Dorsolateral prefrontal cortex (tissue), 120 donors: ENCODE measurements at regions of chr16 and their contacts with region 1.

Region 1: DNA sequence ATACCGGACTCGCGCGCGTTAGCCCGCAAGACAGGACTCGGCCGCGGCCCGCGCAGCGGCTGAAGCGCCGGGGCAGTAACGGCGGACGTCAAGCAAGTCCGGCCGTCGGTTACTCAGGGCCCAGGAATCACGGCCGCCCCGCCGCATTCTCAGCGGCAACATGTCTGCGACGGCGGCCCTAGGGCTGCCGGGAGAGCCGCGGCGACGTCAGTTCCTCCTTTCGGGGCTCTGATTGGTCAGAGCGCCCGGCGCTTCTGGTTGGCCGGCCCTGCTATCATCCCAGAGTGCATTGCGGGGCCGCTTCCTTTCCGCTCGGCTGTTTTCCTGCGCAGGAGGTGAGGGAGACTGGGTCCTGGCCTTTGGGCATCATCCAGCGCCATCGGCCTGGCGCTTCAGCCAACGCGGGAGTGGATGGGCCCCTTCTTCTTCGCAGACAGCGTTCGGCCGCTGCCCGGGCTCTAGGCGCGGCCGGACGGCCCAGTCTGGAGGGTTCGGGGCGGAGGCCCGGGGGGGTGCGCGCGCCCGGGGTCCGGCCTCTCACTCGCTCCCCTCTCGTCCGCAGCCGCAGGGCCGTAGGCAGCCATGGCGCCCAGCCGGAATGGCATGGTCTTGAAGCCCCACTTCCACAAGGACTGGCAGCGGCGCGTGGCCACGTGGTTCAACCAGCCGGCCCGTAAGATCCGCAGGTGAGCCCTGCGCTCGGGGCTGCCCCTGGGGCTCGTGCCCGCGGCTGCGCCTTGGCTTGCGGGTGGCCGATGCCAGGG is at the start of gene RPL13:
- DNase-seq: peak; percentile 93 to 96 (median 95)
- H3K4me3 ChIP-seq: peak within 1 kb of the TSS; percentile 55 to 99 (median 89)
- H3K27ac ChIP-seq: peak within 1 kb of the TSS; percentile 80 to 99 (median 96)
- H3K27me3 ChIP-seq: no peaks in the 10 kb centered on the region
- CTCF ChIP-seq: peak in 22 of 56 donors; percentile 2 to 48 (median 19)
- total RNA-seq, gene RPL13: 467 to 932 (median 664) TPM

Region 2: GRCh38 chr16:89241187-89242007 is 319.2 kb before region 1 on chr16:
- intact Hi-C with region 1: loop called in 1 of 2 experiments (anchors 5 kb)
- DNase-seq: peak; percentile 45 to 84 (median 72)
- H3K4me3 ChIP-seq: peak overlapping the region; percentile 60 to 96 (median 85)
- H3K27ac ChIP-seq: peak overlapping the region; percentile 66 to 97 (median 93)
- H3K27me3 ChIP-seq: no peaks in the 10 kb centered on the region
- CTCF ChIP-seq: peak in 1 of 56 donors; percentile 23

Region 3: DNA sequence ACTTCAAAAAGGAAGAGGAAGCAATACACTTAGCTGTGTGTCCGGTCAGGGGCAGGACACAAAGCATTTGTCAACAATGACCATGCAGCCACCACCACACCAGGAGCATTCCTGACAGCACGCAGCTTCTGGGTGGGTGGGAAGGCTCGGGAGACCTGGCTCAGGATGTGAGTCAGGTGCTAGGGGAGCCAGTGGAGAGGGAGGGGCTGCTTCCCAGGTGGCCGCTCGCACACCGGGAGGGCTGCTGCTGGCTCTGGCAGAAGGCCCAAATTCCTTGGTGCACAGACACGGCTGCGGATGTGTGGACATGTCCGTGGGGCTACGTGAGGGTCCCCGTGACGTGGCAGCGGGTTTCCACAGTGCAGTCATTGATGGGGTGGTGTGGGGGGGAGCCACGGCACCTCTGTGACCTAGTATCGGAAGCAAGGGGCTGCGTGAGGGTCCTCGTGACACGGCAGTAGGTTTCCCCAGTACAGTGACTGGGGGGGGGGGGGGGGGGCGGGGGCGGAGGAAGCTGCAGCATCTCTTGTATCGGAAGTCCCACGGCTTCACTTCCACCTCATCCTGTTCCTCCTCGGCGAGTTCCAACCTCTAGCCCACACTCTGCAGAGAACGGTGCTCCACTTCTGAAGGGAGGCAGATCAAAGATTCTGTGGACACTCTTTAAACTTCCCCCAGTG is 230.2 kb before region 1 on chr16:
- intact Hi-C with region 1: loop called (anchors 2 kb)
- DNase-seq: peak in 2 of 10 donors; percentile 25 to 42
- H3K4me3 ChIP-seq: peak overlapping the region in 18 of 59 donors; percentile 3 to 35 (median 20)
- H3K27ac ChIP-seq: peak overlapping the region in 15 of 59 donors; percentile 5 to 72 (median 49)
- H3K27me3 ChIP-seq: no peaks in the 10 kb centered on the region
- CTCF ChIP-seq: no peak

Region 4: DNA sequence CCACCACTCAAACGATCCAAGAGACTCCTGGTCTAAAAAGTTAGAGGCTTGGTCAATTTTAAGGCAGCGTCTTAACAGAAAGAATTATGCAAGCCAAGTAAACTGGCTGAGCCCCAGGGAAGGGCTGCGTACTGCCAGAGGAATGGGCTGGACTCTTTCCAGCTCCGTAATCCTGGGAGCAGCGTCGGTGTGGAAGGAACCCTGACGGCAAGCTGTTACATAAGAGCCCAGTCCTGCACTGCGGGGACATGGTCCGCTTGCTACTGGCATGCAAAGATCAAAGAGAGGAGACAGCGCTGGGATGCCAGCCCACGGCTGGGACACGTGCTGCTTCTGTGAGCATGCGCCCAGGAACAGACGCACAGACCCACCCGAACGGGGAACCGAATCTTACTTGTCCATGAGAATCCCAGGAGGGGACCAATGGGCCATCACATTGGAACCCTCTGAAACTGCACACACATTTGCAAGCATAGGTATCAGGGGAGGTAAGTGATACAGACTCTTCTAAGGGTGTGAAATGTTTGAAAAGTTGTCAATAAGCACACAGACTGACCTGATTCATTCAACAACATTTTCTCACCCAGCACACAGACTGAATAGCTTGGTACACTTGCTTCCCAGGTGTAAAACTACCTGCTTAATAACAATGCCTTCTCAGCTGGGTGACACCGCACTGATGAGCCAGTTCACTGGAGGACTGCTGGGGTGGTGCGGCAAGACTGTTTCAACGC is 165.3 kb before region 1 on chr16:
- intact Hi-C with region 1: no loop called
- DNase-seq: peak; percentile 64 to 87 (median 80)
- H3K4me3 ChIP-seq: peak overlapping the region in 41 of 59 donors; percentile 0 to 41 (median 14)
- H3K27ac ChIP-seq: peak overlapping the region in 56 of 59 donors; percentile 2 to 86 (median 58)
- H3K27me3 ChIP-seq: no peaks in the 10 kb centered on the region
- CTCF ChIP-seq: peak in 3 of 56 donors; percentile 11 to 19 (median 11)

Region 5: GRCh38 chr16:89490387-89491237 is 69.9 kb before region 1 on chr16 and contains the start of gene ANKRD11:
- intact Hi-C with region 1: loop called in 1 of 2 experiments (anchors 5 kb)
- DNase-seq: peak; percentile 99 to 100 (median 100)
- H3K4me3 ChIP-seq: peak within 1 kb of the TSS; percentile 59 to 100 (median 93)
- H3K27ac ChIP-seq: peak within 1 kb of the TSS in 58 of 59 donors; percentile 5 to 96 (median 87)
- H3K27me3 ChIP-seq: no peaks in the 10 kb centered on the region
- CTCF ChIP-seq: peak in 26 of 56 donors; percentile 6 to 57 (median 22)
- total RNA-seq, gene ANKRD11: 131 to 216 (median 167) TPM

Region 6: DNA sequence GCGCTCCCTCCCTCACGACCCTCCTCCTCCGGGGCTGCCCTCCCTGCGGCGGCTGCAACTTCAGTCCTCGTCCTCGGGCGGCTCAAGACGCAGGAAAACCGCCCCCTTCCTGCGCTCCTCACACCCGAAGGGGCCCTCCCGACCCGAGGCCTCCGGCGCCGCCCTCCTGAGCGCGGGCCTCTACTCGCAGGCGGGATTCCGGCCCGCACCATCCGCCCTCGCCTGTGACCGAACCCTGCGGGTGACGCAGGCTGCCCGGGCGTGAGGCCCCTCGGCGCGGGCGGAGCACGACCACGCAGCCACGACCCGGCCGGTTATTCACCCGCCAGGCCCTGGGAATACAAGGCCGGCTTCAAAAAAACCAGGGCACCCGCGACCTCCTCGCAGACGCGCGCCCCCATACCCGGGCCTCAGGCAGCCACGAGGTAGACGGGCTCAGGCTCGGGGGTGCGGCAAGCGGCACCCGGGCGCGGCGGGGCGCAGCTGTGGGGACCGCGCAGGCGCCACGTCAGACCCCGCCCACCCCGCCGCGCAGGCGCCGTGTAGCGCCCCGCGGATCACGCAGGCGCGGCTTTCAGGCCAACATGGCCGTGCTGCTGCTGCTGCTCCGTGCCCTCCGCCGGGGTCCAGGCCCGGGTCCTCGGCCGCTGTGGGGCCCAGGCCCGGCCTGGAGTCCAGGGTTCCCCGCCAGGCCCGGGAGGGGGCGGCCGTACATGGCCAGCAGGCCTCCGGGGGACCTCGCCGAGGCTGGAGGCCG is 52.5 kb before region 1 on chr16 and contains the start of gene SPG7:
- intact Hi-C with region 1: loop called (anchors 5 kb)
- DNase-seq: peak; percentile 60 to 93 (median 75)
- H3K4me3 ChIP-seq: peak within 1 kb of the TSS; percentile 66 to 100 (median 94)
- H3K27ac ChIP-seq: peak within 1 kb of the TSS; percentile 32 to 95 (median 87)
- H3K27me3 ChIP-seq: no peaks in the 10 kb centered on the region
- CTCF ChIP-seq: peak in 23 of 56 donors; percentile 3 to 56 (median 36)
- total RNA-seq, gene SPG7: 115 to 276 (median 151) TPM

Region 7: DNA sequence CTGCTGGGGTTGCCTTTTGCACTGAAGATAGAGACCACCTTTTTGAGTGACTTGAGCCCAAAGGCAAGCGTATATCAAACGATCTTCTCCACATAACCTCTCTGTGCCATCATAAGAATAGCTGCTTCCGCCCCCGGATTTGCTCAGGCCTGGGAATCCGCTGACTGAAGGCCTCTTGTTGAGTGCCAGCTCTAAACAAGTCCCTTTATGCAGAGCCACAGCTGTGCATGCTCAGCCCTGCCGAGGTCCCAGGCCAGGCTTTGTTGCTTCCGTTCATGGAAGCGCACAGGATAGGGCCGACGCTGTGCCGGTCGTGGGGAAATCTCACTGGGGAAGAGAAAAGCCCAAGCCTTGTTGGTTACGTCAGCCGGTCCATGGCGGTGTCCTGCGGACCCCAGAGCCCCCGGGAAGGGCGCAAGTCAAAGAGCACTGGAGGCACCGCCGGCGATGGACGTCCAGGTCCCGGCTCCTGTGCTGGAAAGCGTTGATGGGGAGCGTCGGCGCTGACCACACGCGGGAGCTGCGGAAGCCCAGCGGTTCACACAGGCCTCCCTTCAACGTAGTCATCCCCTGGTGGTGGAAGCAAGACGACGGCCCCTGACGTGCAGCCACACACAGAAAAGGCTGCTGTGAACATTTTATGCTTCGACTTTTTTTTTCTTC is 23.5 kb before region 1 on chr16:
- intact Hi-C with region 1: loop called in 1 of 2 experiments (anchors 2 kb)
- DNase-seq: peak in 9 of 10 donors; percentile 47 to 82 (median 79)
- H3K4me3 ChIP-seq: peak overlapping the region in 27 of 59 donors; percentile 2 to 47 (median 18)
- H3K27ac ChIP-seq: peak overlapping the region; percentile 60 to 97 (median 89)
- H3K27me3 ChIP-seq: no peaks in the 10 kb centered on the region
- CTCF ChIP-seq: peak in 22 of 56 donors; percentile 7 to 41 (median 26)

Region 8: GRCh38 chr16:89657442-89658220 is 97.1 kb after region 1 on chr16 and contains the starts of genes CHMP1A and SPATA33:
- intact Hi-C with region 1: loop called in 1 of 2 experiments (anchors 5 kb)
- DNase-seq: peak; percentile 79 to 96 (median 86)
- H3K4me3 ChIP-seq: peak within 1 kb of the TSS; percentile 72 to 100 (median 97)
- H3K27ac ChIP-seq: peak within 1 kb of the TSS in 54 of 59 donors; percentile 8 to 92 (median 78)
- H3K27me3 ChIP-seq: no peaks in the 10 kb centered on the region
- CTCF ChIP-seq: peak in 14 of 56 donors; percentile 10 to 51 (median 21)
- total RNA-seq, gene CHMP1A: 59.2 to 89.8 (median 72.3) TPM
- total RNA-seq, gene SPATA33: 14.5 to 39.6 (median 23.2) TPM